B cell (primary cell): ENCODE measurements at regions of chr1 and their contacts with region 1.

Region 1: DNA sequence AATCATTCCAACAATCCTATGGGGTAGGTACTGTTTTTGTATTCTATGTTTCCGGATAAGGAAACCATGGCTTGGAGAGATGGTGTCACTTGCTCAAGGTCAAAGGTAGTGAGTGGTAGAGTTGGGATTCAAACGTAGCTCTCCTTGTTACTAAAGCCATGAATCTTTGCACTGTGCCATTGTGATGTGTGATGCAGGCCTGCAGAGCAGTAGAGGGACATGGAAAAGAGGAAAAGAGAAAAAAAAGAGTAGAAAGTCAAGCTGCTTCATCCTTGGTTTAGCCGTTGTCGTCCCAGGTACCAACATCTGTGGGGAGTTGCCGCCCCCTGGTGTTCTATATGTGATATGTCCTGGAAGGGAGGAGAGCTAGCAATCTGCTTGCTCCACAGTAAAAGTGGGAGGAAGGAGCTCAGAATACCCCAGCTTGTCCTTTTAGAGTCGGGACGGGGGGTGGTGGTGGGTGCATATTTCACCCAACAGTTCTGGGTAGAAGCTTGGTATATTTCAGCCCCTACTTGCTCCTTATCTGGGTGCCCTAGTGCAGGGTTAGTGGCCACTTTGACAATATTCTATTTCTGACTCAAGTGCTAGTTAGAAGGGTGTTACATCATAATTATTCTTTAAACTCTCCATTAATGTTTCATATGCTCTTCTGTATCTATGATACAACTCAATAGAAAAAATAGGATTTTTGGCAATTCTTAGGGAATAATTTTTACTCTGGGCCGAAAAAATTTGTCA is 98.4 kb downstream of the EBNA1BP2 start:
- DNase-seq: peak; percentile 85
- ATAC-seq: peak; percentile 86
- H3K4me3 ChIP-seq: no peak overlapping the region
- H3K4me3 Mint-ChIP-seq: peak overlapping the region; percentile 71
- H3K27ac ChIP-seq: peak overlapping the region in 1 of 2 donors; percentile 11
- H3K27ac Mint-ChIP-seq: peak overlapping the region; percentile 83
- H3K4me1 ChIP-seq: peaks cover 18 to 19% of the 10 kb centered on the region in 2 donors
- H3K4me1 Mint-ChIP-seq: peaks cover 37% of the 10 kb centered on the region
- H3K27me3 ChIP-seq: peaks cover 0 to 2% (median 0%) of the 10 kb centered on the region in 4 experiments
- H3K27me3 Mint-ChIP-seq: no peaks in the 10 kb centered on the region
- CTCF ChIP-seq: peak; percentile 90

Region 2: GRCh38 chr1:42576935-42577334 is 496.7 kb before region 1 on chr1:
- CTCF ChIA-PET with region 1: interaction called, 24 read pairs
- POLR2A ChIA-PET with region 1: no interaction called
- intact Hi-C with region 1: no loop called
- DNase-seq: no peak
- ATAC-seq: no peak
- H3K4me3 ChIP-seq: no peak overlapping the region
- H3K4me3 Mint-ChIP-seq: no peak overlapping the region
- H3K27ac ChIP-seq: no peak overlapping the region
- H3K27ac Mint-ChIP-seq: no peak overlapping the region
- H3K4me1 ChIP-seq: no peaks in the 10 kb centered on the region
- H3K4me1 Mint-ChIP-seq: no peaks in the 10 kb centered on the region
- H3K27me3 ChIP-seq: no peaks in the 10 kb centered on the region
- H3K27me3 Mint-ChIP-seq: no peaks in the 10 kb centered on the region
- CTCF ChIP-seq: no peak

Region 3: DNA sequence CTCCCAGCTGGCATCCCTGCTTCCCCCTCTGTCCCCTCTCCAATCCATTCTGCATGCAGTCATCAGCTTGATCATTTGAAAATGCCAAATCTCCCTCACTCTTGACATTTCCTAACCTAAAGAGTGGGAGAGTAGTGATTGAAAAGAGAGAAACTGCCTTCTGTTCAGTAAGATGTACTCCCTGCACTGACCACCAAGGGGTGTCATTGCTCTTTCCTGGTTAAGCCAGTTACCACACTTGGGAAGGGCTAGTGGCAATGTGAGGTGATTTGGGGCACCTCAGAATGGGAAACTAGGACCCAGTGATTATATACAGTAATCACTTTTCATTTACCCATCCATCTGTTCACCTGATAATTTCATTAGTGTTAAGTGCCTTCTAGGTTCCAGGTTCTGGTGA is 295.8 kb before region 1 on chr1:
- CTCF ChIA-PET with region 1: interaction called, 93 read pairs
- POLR2A ChIA-PET with region 1: interaction called, 3 read pairs
- intact Hi-C with region 1: loop called (anchors 1 kb)
- DNase-seq: peak; percentile 45
- ATAC-seq: peak; percentile 60
- H3K4me3 ChIP-seq: no peak overlapping the region
- H3K4me3 Mint-ChIP-seq: no peak overlapping the region
- H3K27ac ChIP-seq: no peak overlapping the region
- H3K27ac Mint-ChIP-seq: no peak overlapping the region
- H3K4me1 ChIP-seq: no peaks in the 10 kb centered on the region
- H3K4me1 Mint-ChIP-seq: peaks cover 5% of the 10 kb centered on the region
- H3K27me3 ChIP-seq: no peaks in the 10 kb centered on the region
- H3K27me3 Mint-ChIP-seq: no peaks in the 10 kb centered on the region
- CTCF ChIP-seq: peak; percentile 70

Region 4: GRCh38 chr1:42904434-42904833 is 169.2 kb before region 1 on chr1:
- CTCF ChIA-PET with region 1: interaction called, 13 read pairs
- POLR2A ChIA-PET with region 1: no interaction called
- intact Hi-C with region 1: no loop called
- DNase-seq: no peak
- ATAC-seq: no peak
- H3K4me3 ChIP-seq: no peak overlapping the region
- H3K4me3 Mint-ChIP-seq: no peak overlapping the region
- H3K27ac ChIP-seq: no peak overlapping the region
- H3K27ac Mint-ChIP-seq: no peak overlapping the region
- H3K4me1 ChIP-seq: no peaks in the 10 kb centered on the region
- H3K4me1 Mint-ChIP-seq: no peaks in the 10 kb centered on the region
- H3K27me3 ChIP-seq: peaks cover 0 to 8% (median under 1%) of the 10 kb centered on the region in 4 experiments
- H3K27me3 Mint-ChIP-seq: peaks cover 31% of the 10 kb centered on the region
- CTCF ChIP-seq: no peak

Region 5: GRCh38 chr1:42931108-42931539 is 142.5 kb before region 1 on chr1:
- CTCF ChIA-PET with region 1: interaction called, 1,178 read pairs
- POLR2A ChIA-PET with region 1: interaction called, 9 read pairs
- intact Hi-C with region 1: no loop called
- DNase-seq: peak; percentile 80
- ATAC-seq: no peak
- H3K4me3 ChIP-seq: peak overlapping the region; percentile 2 to 42 (median 26)
- H3K4me3 Mint-ChIP-seq: peak overlapping the region; percentile 86
- H3K27ac ChIP-seq: peak overlapping the region; percentile 84 to 97
- H3K27ac Mint-ChIP-seq: peak overlapping the region; percentile 97
- H3K4me1 ChIP-seq: peaks cover 54 to 66% of the 10 kb centered on the region in 2 donors
- H3K4me1 Mint-ChIP-seq: peaks cover 80% of the 10 kb centered on the region
- H3K27me3 ChIP-seq: no peaks in the 10 kb centered on the region
- H3K27me3 Mint-ChIP-seq: no peaks in the 10 kb centered on the region
- CTCF ChIP-seq: peak; percentile 69

Region 6: DNA sequence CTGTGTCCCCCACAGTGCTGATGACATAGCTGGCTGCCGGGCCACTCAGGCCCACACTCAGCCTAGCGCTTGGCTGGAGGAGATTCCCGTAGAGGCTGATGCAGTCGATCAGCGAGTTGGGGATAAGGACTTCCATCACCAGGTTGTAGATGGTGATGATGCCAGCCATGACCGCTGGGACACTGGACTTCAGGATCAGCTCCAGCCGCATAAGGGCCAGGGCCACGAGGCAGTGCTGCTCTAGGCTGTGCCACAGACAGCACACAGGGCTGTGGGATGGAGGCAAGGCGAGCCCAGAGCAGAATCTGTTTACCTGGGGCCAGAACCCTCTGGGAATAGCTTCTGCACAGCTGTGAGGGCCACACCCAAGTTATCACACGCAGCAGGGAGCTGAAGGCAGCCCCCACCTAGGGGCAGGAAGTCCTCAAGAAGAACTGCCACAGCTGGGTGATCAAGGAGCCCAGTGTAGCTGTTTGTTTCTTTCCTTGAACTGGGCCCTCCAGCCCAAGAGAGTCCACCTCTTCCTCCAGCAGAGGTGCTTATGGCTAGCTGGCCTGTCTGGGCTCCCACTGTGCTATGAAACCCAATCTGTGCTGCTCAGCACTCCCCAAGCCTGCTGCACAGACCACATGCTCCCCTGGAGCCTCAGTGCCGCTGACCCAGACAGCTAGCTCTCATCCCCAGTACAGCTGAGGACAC is 121.2 kb before region 1 on chr1:
- CTCF ChIA-PET with region 1: interaction called, 73 read pairs
- POLR2A ChIA-PET with region 1: interaction called, 10 read pairs
- intact Hi-C with region 1: no loop called
- DNase-seq: peak; percentile 89
- ATAC-seq: peak; percentile 82
- H3K4me3 ChIP-seq: peak overlapping the region in 4 of 5 experiments; percentile 19 to 56 (median 30)
- H3K4me3 Mint-ChIP-seq: peak overlapping the region; percentile 93
- H3K27ac ChIP-seq: peak overlapping the region; percentile 94 to 95
- H3K27ac Mint-ChIP-seq: peak overlapping the region; percentile 99
- H3K4me1 ChIP-seq: peaks cover 91 to 99% of the 10 kb centered on the region in 2 donors
- H3K4me1 Mint-ChIP-seq: peaks cover 91% of the 10 kb centered on the region
- H3K27me3 ChIP-seq: no peaks in the 10 kb centered on the region
- H3K27me3 Mint-ChIP-seq: no peaks in the 10 kb centered on the region
- CTCF ChIP-seq: no peak

Region 7: GRCh38 chr1:43058545-43059355 is 14.9 kb before region 1 on chr1:
- CTCF ChIA-PET with region 1: interaction called, 19 read pairs
- POLR2A ChIA-PET with region 1: no interaction called
- intact Hi-C with region 1: no loop called
- DNase-seq: no peak
- ATAC-seq: no peak
- H3K4me3 ChIP-seq: no peak overlapping the region
- H3K4me3 Mint-ChIP-seq: no peak overlapping the region
- H3K27ac ChIP-seq: no peak overlapping the region
- H3K27ac Mint-ChIP-seq: no peak overlapping the region
- H3K4me1 ChIP-seq: peaks cover 0 to 5% of the 10 kb centered on the region in 2 donors
- H3K4me1 Mint-ChIP-seq: peaks cover 13% of the 10 kb centered on the region
- H3K27me3 ChIP-seq: no peaks in the 10 kb centered on the region
- H3K27me3 Mint-ChIP-seq: peaks cover 42% of the 10 kb centered on the region
- CTCF ChIP-seq: no peak

Region 8: DNA sequence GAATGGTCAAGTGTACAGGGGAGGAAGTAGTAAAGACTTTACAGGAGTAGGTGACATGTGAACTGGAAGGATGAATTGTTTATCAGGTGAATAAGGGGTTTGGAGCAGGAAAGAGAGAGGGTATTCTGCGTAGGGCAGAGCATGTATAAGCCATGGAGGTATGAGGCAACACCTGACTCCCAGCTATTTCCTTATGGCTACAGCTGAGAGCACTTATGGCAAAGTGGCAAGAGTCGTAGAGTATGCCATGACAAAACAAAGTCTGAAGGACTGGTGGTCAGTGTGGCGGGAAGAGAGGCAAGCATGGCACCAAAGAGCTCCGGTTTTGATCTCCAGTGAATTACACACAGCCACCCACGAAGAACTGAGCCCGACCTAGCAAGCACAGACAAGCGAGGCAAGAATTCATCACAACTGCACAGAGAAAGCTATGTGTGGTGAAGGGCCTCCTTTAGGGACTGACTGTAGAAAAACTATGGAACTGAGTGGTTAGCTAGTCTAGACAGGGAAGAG is 303.1 kb after region 1 on chr1:
- CTCF ChIA-PET with region 1: no interaction called
- POLR2A ChIA-PET with region 1: no interaction called
- intact Hi-C with region 1: no loop called
- DNase-seq: no peak
- ATAC-seq: no peak
- H3K4me3 ChIP-seq: no peak overlapping the region
- H3K4me3 Mint-ChIP-seq: no peak overlapping the region
- H3K27ac ChIP-seq: no peak overlapping the region
- H3K27ac Mint-ChIP-seq: no peak overlapping the region
- H3K4me1 ChIP-seq: no peaks in the 10 kb centered on the region
- H3K4me1 Mint-ChIP-seq: no peaks in the 10 kb centered on the region
- H3K27me3 ChIP-seq: no peaks in the 10 kb centered on the region
- H3K27me3 Mint-ChIP-seq: no peaks in the 10 kb centered on the region
- CTCF ChIP-seq: no peak